Body of pancreas (tissue), 4 donors: ENCODE measurements at regions of chr6 and their contacts with region 1.

Region 1: GRCh38 chr6:138765896-138766655 is 7.5 kb upstream of the CCDC28A start:
- DNase-seq: peak in 2 of 4 donors; percentile 11 to 18
- ATAC-seq: peak; percentile 56
- H3K4me3 ChIP-seq: no peak overlapping the region
- H3K27ac ChIP-seq: no peak overlapping the region
- H3K4me1 ChIP-seq: no peaks in the 10 kb centered on the region
- H3K27me3 ChIP-seq: no peaks in the 10 kb centered on the region
- CTCF ChIP-seq: peak in 6 of 7 experiments; percentile 53 to 83 (median 76)
- POLR2A ChIP-seq: no peak

Region 2: GRCh38 chr6:138590796-138591709 is 175.0 kb before region 1 on chr6:
- intact Hi-C with region 1: loop called (anchors 5 kb)
- DNase-seq: peak; percentile 72 to 78 (median 76)
- ATAC-seq: peak; percentile 64
- H3K4me3 ChIP-seq: no peak overlapping the region
- H3K27ac ChIP-seq: no peak overlapping the region
- H3K4me1 ChIP-seq: peaks cover 10% of the 10 kb centered on the region
- H3K27me3 ChIP-seq: no peaks in the 10 kb centered on the region
- CTCF ChIP-seq: peak; percentile 71 to 85 (median 73)
- POLR2A ChIP-seq: no peak

Region 3: GRCh38 chr6:138692058-138692977 is 73.8 kb before region 1 on chr6:
- intact Hi-C with region 1: loop called (anchors 5 kb)
- DNase-seq: peak; percentile 71 to 83 (median 75)
- ATAC-seq: peak; percentile 78
- H3K4me3 ChIP-seq: peak overlapping the region; percentile 52 to 59
- H3K27ac ChIP-seq: peak overlapping the region; percentile 82 to 91 (median 89)
- H3K4me1 ChIP-seq: peaks cover 16% of the 10 kb centered on the region
- H3K27me3 ChIP-seq: no peaks in the 10 kb centered on the region
- CTCF ChIP-seq: peak; percentile 62 to 93 (median 80)
- POLR2A ChIP-seq: no peak

Region 4: GRCh38 chr6:138805016-138805765 is 39.1 kb after region 1 on chr6:
- intact Hi-C with region 1: no loop called
- DNase-seq: no peak
- ATAC-seq: no peak
- H3K4me3 ChIP-seq: no peak overlapping the region
- H3K27ac ChIP-seq: no peak overlapping the region
- H3K4me1 ChIP-seq: no peaks in the 10 kb centered on the region
- H3K27me3 ChIP-seq: no peaks in the 10 kb centered on the region
- CTCF ChIP-seq: no peak
- POLR2A ChIP-seq: no peak